ENCODE measurements at regions of chr22 and their contacts with region 1.

Region 1: GRCh38 chr22:39520054-39520891 is at the start of gene ATF4:
- DNase-seq: peak; percentile 97
- H3K4me3 ChIP-seq: peak within 1 kb of the TSS; percentile 83
- H3K27ac ChIP-seq: peak within 1 kb of the TSS; percentile 96
- H3K4me1 ChIP-seq: peaks cover 9% of the 10 kb centered on the region
- H3K27me3 ChIP-seq: no peaks in the 10 kb centered on the region
- CTCF ChIP-seq: no peak
- total RNA-seq, gene ATF4: 279 to 302 TPM

Region 2: DNA sequence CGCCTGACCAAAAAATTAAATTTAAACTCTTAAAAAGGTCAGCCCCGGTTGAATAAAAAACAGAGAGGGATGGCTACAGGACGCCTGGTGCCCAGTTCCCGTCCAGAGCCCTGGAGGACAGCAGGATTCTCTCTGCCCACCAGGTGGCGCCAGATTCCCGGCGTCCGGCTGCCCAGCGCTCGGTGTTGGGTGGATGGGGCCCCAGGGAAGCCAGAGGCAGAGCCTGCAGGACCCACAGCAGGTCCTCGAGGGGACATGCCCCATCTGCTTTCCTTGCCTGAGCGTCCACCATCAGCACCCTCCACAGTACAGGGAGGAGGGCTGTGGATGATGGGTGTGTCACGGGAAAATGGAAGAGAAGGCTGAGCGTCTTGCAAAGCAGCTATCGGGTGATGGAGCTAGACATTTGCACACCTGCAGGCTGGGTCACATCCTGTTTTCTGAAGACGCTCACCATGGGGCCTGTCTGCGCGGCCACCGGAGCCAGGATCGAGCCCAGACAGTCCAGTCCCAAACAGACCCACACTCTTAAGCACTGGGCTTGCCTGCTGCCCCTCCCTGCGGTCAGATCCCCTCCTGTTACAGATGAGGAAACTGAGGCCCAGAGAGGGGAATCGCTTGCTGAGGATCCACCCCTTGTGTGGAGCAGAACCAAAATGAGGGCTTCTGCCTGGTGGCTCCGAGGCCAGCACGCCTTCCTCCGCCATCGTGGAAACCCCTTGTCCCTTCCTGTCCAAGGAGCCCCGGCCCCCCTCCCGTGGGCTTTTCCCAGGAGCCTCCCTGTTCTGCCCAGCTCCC is 349.2 kb before region 1 on chr22:
- intact Hi-C with region 1: loop called (anchors 10 kb)
- DNase-seq: peak; percentile 82
- H3K4me3 ChIP-seq: no peak overlapping the region
- H3K27ac ChIP-seq: no peak overlapping the region
- H3K4me1 ChIP-seq: peaks cover 6% of the 10 kb centered on the region
- H3K27me3 ChIP-seq: no peaks in the 10 kb centered on the region
- CTCF ChIP-seq: peak; percentile 94

Region 3: GRCh38 chr22:39319270-39320022 is 200.8 kb before region 1 on chr22 and contains the start of gene RPL3:
- intact Hi-C with region 1: loop called (anchors 10 kb)
- DNase-seq: peak; percentile 97
- H3K4me3 ChIP-seq: peak within 1 kb of the TSS; percentile 83
- H3K27ac ChIP-seq: peak within 1 kb of the TSS; percentile 99
- H3K4me1 ChIP-seq: peaks cover 28% of the 10 kb centered on the region
- H3K27me3 ChIP-seq: no peaks in the 10 kb centered on the region
- CTCF ChIP-seq: no peak
- total RNA-seq, gene RPL3: 1,796 to 1,829 TPM

Region 4: GRCh38 chr22:39395936-39396796 is 124.1 kb before region 1 on chr22:
- intact Hi-C with region 1: loop called (anchors 5 kb)
- DNase-seq: no peak
- H3K4me3 ChIP-seq: no peak overlapping the region
- H3K27ac ChIP-seq: no peak overlapping the region
- H3K4me1 ChIP-seq: peaks cover 4% of the 10 kb centered on the region
- H3K27me3 ChIP-seq: no peaks in the 10 kb centered on the region
- CTCF ChIP-seq: no peak

Measured in colonic mucosa (tissue), 4 donors.